ENCODE measurements at regions of chr18 and their contacts with region 1.

Region 1: GRCh38 chr18:778194-778927 is 33.7 kb downstream of the YES1 start:
- DNase-seq: no peak
- H3K4me3 Mint-ChIP-seq: no peak overlapping the region
- H3K27ac Mint-ChIP-seq: no peak overlapping the region
- H3K4me1 Mint-ChIP-seq: peaks cover 4% of the 10 kb centered on the region
- H3K27me3 Mint-ChIP-seq: no peaks in the 10 kb centered on the region

Region 2: GRCh38 chr18:801137-801536 is 22.8 kb after region 1 on chr18:
- CTCF ChIA-PET with region 1: interaction called, 10 read pairs
- POLR2A ChIA-PET with region 1: no interaction called
- DNase-seq: no peak
- H3K4me3 Mint-ChIP-seq: no peak overlapping the region
- H3K27ac Mint-ChIP-seq: no peak overlapping the region
- H3K4me1 Mint-ChIP-seq: peaks cover 43% of the 10 kb centered on the region
- H3K27me3 Mint-ChIP-seq: no peaks in the 10 kb centered on the region

Measured in activated CD4-positive, alpha-beta T cell treated with anti-CD3 and anti-CD28 coated beads, Interleukin-2, amount 10 ng/mL, durations not matched to agents 7 days and 5 days (primary cell).